ENCODE measurements at regions of chr11 and their contacts with region 1.

Region 1: DNA sequence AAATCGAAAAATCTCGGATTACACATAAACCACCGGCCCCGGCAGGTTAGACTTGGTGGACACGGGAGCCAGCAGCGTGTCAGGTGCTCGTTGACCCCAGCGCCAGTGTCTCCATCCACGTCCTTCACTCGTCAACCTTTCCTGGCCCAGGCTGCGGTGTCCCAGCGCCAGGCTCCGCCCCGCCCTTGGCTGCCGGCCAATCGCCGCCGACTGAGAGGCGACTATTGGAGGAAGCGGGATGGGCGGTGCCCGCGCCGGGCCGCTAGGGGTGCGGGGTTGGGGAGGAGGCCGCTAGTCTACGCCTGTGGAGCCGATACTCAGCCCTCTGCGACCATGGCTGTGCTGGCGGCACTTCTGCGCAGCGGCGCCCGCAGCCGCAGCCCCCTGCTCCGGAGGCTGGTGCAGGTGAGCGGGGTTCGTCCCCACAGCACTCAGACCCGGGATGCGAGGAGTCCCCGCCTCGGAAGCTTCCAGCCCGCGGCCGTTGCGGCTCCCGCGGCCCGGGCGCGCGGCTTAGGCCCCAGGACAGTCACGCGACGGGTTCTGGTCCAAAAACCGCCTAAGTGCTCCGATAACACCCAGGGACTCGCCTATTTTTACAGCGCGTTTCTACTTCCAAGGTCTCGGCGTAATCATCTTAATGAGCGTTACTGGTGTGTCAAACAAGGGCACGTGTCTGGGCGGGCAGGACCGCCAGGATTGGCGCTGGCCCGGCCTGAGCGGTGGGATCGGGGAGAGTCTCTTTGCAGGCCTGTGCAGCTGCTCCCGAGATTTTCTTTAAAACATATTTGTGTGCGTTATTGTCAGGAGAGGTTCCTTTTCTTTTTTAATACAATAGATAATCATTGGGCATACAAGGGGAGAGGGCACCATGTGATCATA is at the start of gene ACAT1:
- DNase-seq: peak; percentile 91 to 98 (median 94)
- ATAC-seq: peak; percentile 100
- H3K4me3 ChIP-seq: peak within 1 kb of the TSS; percentile 88
- H3K4me3 Mint-ChIP-seq: peak within 1 kb of the TSS; percentile 81 to 97 (median 94)
- H3K27ac ChIP-seq: peak within 1 kb of the TSS; percentile 66
- H3K27ac Mint-ChIP-seq: peak within 1 kb of the TSS; percentile 61 to 93 (median 85)
- H3K4me1 ChIP-seq: peaks cover 16 to 20% of the 10 kb centered on the region in 2 donors
- H3K4me1 Mint-ChIP-seq: peaks cover 35 to 49% (median 41%) of the 10 kb centered on the region in 7 donors
- H3K27me3 ChIP-seq: no peaks in the 10 kb centered on the region
- H3K27me3 Mint-ChIP-seq: no peaks in the 10 kb centered on the region
- total RNA-seq, gene ACAT1: 13.0 to 40.2 (median 17.9) TPM

Region 2: DNA sequence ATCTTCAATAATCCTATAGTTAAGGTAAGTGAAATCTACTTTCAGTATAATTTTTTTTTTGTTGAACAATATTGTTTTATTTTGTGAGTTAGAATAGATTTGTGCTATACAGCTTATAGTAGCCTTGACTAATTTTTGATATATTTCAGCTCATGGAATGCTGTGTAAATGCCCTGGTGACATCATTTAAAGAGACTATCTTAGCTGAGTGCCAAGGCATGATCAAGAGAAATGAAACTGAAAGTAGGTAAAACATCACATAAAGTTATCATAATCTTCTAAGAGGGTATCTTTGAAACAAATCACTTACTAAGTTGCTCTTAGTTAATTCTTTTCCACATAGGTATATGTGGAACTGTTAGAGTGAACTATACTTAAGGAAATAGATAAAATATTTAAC is 51.6 kb before region 1 on chr11:
- CTCF ChIA-PET with region 1: no interaction called
- POLR2A ChIA-PET with region 1: interaction called, 3 read pairs
- intact Hi-C with region 1: loop called in 1 of 2 experiments (anchors 1 kb)
- DNase-seq: peak in 7 of 9 donors; percentile 7 to 37 (median 21)
- ATAC-seq: peak; percentile 72
- H3K4me3 ChIP-seq: peak overlapping the region; percentile 8
- H3K4me3 Mint-ChIP-seq: peak overlapping the region in 8 of 10 donors; percentile 23 to 63 (median 52)
- H3K27ac ChIP-seq: peak overlapping the region; percentile 40
- H3K27ac Mint-ChIP-seq: peak overlapping the region; percentile 17 to 86 (median 76)
- H3K4me1 ChIP-seq: peaks cover 0 to 6% of the 10 kb centered on the region in 2 donors
- H3K4me1 Mint-ChIP-seq: peaks cover 11 to 43% (median 19%) of the 10 kb centered on the region in 7 donors
- H3K27me3 ChIP-seq: no peaks in the 10 kb centered on the region
- H3K27me3 Mint-ChIP-seq: no peaks in the 10 kb centered on the region

Region 3: DNA sequence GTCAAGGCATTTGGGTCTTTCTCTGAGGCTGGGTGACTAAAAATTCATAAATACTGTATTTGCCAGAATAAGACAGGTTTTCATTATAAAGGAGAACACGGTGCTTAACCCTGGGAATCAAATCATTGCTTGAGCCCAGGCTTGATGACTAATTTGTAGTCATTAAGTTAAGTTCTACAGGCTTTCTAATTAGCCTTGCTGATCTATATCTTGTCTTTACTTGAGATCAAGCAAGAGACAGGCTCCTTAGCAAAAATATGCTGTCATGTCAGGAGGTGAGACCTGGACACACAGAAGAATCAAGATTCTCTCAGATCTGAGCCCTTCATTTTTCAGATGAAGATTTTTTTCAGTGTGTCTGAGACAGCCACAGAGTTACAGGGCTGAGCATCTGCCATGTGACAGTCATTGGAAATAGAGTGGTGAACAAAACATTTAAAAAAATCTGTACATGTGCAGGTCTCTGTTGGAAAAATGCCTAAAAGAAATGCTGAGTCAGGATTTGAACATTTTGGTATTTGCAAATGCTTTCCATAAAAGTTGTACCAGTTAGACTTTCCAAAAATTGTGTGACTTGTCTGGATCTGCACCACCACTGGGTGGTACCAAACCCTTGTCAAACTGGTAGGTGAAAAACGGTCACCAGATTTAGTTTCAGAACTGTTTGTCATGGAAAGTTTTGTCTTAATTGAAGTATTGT is 14.5 kb after region 1 on chr11:
- CTCF ChIA-PET with region 1: interaction called, 4 read pairs
- POLR2A ChIA-PET with region 1: interaction called, 4 read pairs
- intact Hi-C with region 1: loop called in 1 of 2 experiments (anchors 1 kb)
- DNase-seq: peak in 6 of 9 donors; percentile 11 to 38 (median 29)
- ATAC-seq: peak; percentile 54
- H3K4me3 ChIP-seq: no peak overlapping the region
- H3K4me3 Mint-ChIP-seq: no peak overlapping the region
- H3K27ac ChIP-seq: no peak overlapping the region
- H3K27ac Mint-ChIP-seq: peak overlapping the region in 6 of 9 donors; percentile 16 to 72 (median 43)
- H3K4me1 ChIP-seq: no peaks in the 10 kb centered on the region
- H3K4me1 Mint-ChIP-seq: peaks cover 0 to 20% (median 11%) of the 10 kb centered on the region in 7 donors
- H3K27me3 ChIP-seq: no peaks in the 10 kb centered on the region
- H3K27me3 Mint-ChIP-seq: no peaks in the 10 kb centered on the region

Region 4: GRCh38 chr11:108497317-108498045 is 376.0 kb after region 1 on chr11:
- CTCF ChIA-PET with region 1: no interaction called
- POLR2A ChIA-PET with region 1: interaction called, 3 read pairs
- intact Hi-C with region 1: loop called (anchors 1 to 10 kb)
- DNase-seq: peak in 8 of 9 donors; percentile 68 to 83 (median 76)
- ATAC-seq: peak; percentile 92
- H3K4me3 ChIP-seq: peak overlapping the region; percentile 77
- H3K4me3 Mint-ChIP-seq: peak overlapping the region; percentile 95 to 100 (median 98)
- H3K27ac ChIP-seq: peak overlapping the region; percentile 87
- H3K27ac Mint-ChIP-seq: peak overlapping the region; percentile 95 to 100 (median 99)
- H3K4me1 ChIP-seq: peaks cover 0 to 3% of the 10 kb centered on the region in 2 donors
- H3K4me1 Mint-ChIP-seq: peaks cover 8 to 33% (median 24%) of the 10 kb centered on the region in 7 donors
- H3K27me3 ChIP-seq: no peaks in the 10 kb centered on the region
- H3K27me3 Mint-ChIP-seq: no peaks in the 10 kb centered on the region

Region 5: DNA sequence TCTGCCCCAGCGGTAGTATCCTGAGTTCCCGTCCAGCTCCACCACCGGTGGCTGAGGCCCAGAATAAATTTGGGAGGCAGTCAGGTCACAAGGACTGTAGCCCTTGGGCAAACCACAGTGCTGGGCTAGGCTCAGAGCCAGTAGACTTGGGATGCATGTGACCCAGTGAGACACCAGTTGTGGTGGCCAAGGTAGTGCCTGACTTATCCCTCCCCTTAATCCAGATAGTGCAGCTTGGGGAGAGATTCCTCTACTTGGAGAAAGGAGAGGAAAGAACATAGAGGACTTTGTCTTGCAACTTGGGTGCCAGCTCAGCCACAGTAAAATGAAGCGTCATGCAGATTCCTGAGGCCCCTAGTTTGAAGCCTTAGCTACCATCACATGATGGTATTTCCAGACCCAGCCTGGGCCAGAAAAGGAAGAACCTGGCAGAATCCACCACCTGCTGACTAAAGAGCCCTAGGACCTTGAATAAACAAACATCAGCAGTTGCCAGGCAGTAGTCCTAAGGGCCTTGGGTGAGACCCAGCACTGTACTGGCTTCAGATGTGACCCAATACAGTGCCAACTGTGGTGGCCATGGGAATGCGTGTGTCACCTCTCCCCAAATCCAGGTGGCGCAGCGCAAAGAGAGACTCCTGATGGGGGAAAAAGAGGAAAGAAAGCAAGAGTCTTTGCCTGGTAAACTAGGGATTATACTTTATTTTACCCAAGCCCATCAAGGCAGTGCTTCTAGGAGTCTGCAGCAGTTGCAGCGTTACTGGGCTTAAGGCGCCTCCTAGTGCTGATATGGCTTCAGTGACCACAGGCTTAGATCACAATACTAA is 526.4 kb after region 1 on chr11:
- CTCF ChIA-PET with region 1: interaction called, 14 read pairs
- POLR2A ChIA-PET with region 1: no interaction called
- intact Hi-C with region 1: loop called (anchors 1 kb)
- DNase-seq: peak; percentile 17 to 70 (median 62)
- ATAC-seq: peak; percentile 91
- H3K4me3 ChIP-seq: no peak overlapping the region
- H3K4me3 Mint-ChIP-seq: no peak overlapping the region
- H3K27ac ChIP-seq: no peak overlapping the region
- H3K27ac Mint-ChIP-seq: no peak overlapping the region
- H3K4me1 ChIP-seq: no peaks in the 10 kb centered on the region
- H3K4me1 Mint-ChIP-seq: no peaks in the 10 kb centered on the region
- H3K27me3 ChIP-seq: no peaks in the 10 kb centered on the region
- H3K27me3 Mint-ChIP-seq: peaks cover 0 to 9% (median 0%) of the 10 kb centered on the region in 5 donors

Measured in naive thymus-derived CD4-positive, alpha-beta T cell (primary cell).